ENCODE measurements at regions of chr3 and their contacts with region 1.

Region 1: GRCh38 chr3:150870396-150870795 is 34.8 kb downstream of the MINDY4B start:
- DNase-seq: no peak
- H3K4me3 Mint-ChIP-seq: no peak overlapping the region
- H3K27ac Mint-ChIP-seq: no peak overlapping the region
- H3K4me1 Mint-ChIP-seq: no peaks in the 10 kb centered on the region
- H3K27me3 Mint-ChIP-seq: peaks cover 24% of the 10 kb centered on the region
- CTCF ChIP-seq: no peak

Region 2: DNA sequence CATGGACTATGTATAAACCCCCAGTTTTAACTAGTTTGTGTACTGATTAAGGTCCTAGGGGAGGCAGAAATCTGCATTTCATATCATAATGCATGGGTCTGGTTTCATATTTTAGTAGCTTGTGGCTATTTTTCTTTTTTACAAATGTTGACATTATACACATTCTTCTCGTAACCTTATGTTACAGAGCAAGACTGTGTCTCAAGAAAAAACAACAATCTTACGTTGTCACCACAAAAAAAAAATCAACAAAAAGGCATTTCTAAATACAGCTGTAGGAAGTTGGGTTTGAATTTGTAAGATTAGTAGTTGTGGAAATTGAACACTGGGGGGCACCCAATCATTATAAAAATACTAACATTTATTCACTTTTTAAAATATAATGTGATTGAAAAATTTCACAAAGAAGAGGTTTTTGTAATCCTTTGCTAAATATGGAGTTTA is 342.0 kb before region 1 on chr3:
- CTCF ChIA-PET with region 1: interaction called, 4 read pairs
- intact Hi-C with region 1: loop called (anchors 1 kb)
- DNase-seq: no peak
- H3K4me3 Mint-ChIP-seq: no peak overlapping the region
- H3K27ac Mint-ChIP-seq: no peak overlapping the region
- H3K4me1 Mint-ChIP-seq: no peaks in the 10 kb centered on the region
- H3K27me3 Mint-ChIP-seq: no peaks in the 10 kb centered on the region
- CTCF ChIP-seq: peak; percentile 39

Region 3: DNA sequence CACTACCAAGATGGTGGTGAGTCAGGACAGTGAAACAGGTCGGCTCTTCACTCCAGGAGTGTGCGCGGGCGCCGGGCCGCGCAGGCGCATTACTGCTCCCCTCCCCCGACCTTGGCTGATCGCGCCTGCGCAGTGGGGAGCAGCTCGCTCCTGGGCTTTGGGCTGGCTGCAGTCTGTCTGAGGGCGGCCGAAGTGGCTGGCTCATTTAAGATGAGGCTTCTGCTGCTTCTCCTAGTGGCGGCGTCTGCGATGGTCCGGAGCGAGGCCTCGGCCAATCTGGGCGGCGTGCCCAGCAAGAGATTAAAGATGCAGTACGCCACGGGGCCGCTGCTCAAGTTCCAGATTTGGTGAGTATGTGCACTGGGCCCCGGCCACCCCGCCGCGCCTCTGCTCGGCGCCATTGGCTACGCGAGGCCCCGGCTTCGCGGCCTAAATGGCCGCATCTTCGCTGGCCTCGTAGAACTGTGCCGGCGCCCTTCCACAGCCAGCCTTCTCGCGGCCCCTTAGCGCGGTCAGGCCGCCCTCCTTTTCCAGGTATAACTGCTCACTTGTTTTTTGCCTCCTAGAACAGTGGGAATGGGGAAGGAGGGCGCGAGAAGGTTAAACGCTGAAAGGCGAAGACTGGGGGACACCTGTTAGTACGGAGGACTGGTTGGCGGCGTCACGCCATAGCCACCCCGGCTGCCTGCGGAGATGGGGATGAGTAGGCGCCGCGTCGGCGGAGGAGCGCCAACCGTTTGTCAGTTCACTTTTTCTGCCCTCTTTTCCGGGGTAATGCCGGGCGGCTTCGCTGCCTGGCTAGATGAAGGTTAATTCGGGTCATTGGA is 267.0 kb before region 1 on chr3 and contains the start of gene SELENOT:
- CTCF ChIA-PET with region 1: no interaction called
- intact Hi-C with region 1: loop called (anchors 10 kb)
- DNase-seq: peak; percentile 98
- H3K4me3 Mint-ChIP-seq: peak within 1 kb of the TSS; percentile 97
- H3K27ac Mint-ChIP-seq: peak within 1 kb of the TSS; percentile 98
- H3K4me1 Mint-ChIP-seq: peaks cover 67% of the 10 kb centered on the region
- H3K27me3 Mint-ChIP-seq: no peaks in the 10 kb centered on the region
- CTCF ChIP-seq: peak; percentile 31
- total RNA-seq, gene SELENOT: 200 and 210 TPM in 2 replicates

Region 4: GRCh38 chr3:150787741-150788370 is 82.5 kb before region 1 on chr3:
- CTCF ChIA-PET with region 1: interaction called, 10 read pairs
- intact Hi-C with region 1: loop called (anchors 1 kb)
- DNase-seq: peak; percentile 95
- H3K4me3 Mint-ChIP-seq: no peak overlapping the region
- H3K27ac Mint-ChIP-seq: no peak overlapping the region
- H3K4me1 Mint-ChIP-seq: no peaks in the 10 kb centered on the region
- H3K27me3 Mint-ChIP-seq: no peaks in the 10 kb centered on the region
- CTCF ChIP-seq: peak; percentile 98

Measured in Calu3 (cell line).